ENCODE measurements at regions of chr14 and their contacts with region 1.

Region 1: DNA sequence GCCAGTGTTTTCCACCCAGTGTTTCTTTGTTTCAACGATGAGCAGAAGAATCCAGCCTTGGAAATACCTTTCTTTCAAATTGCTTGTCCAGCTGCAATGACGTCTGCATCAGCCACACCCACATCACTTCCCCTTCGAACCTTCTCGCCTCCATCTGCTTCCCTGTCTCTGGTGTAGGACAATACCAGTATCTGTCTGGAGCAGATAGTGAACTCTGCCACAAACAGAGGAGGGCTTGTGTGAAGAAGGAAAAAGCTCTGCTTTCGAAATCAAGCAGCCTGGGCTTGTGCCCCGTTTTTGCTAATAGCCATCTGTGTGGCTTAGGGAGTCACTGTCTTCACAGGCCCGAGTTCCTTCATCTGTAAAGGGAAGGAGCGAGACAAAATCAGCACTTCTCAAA is 415.4 kb downstream of the ZFP36L1 start:
- DNase-seq: no peak
- ATAC-seq: peak; percentile 28
- H3K4me3 ChIP-seq: no peak overlapping the region
- H3K27ac ChIP-seq: peak overlapping the region; percentile 83
- H3K4me1 ChIP-seq: peaks cover 67% of the 10 kb centered on the region
- H3K27me3 ChIP-seq: no peaks in the 10 kb centered on the region
- CTCF ChIP-seq: no peak
- EP300 ChIP-seq: no peak
- POLR2A ChIP-seq: no peak
- RAD21 ChIP-seq: no peak

Region 2: DNA sequence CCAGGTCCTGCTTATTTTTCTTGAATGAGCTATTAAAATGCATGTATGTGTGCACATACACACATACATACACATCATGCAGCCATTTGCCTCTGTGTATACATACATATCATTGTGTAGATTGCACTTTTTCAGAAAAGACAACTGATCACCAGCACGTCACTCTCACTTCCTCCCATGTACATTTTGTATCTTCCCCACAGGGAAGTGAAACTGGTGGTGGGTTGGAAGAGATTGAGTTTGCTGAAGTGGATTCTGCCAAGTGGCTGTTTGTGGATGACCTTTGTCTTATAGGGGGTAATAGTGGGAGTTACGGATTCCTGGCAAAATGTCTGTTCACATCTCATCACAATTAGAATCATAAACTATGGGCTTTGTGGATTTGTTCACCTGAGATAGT is 109.3 kb before region 1 on chr14:
- CTCF ChIA-PET with region 1: interaction called, 4 read pairs
- POLR2A ChIA-PET with region 1: interaction called, 7 read pairs
- RAD21 ChIA-PET with region 1: interaction called, 13 read pairs
- SMC1A ChIA-PET with region 1: interaction called, 51 read pairs
- in situ Hi-C with region 1: no loop called
- intact Hi-C with region 1: loop called (anchors 1 kb)
- DNase-seq: peak; percentile 93
- ATAC-seq: peak; percentile 84
- H3K4me3 ChIP-seq: no peak overlapping the region
- H3K27ac ChIP-seq: peak overlapping the region; percentile 84
- H3K4me1 ChIP-seq: peaks cover 73% of the 10 kb centered on the region
- H3K27me3 ChIP-seq: no peaks in the 10 kb centered on the region
- CTCF ChIP-seq: no peak
- EP300 ChIP-seq: peak; percentile 93 to 100; a peak in 3 of 4 replicates
- POLR2A ChIP-seq: no peak
- RAD21 ChIP-seq: peak; percentile 22

Region 3: GRCh38 chr14:68307014-68307789 is 70.3 kb before region 1 on chr14:
- CTCF ChIA-PET with region 1: interaction called, 17 read pairs
- POLR2A ChIA-PET with region 1: interaction called, 8 read pairs
- RAD21 ChIA-PET with region 1: interaction called, 40 read pairs
- SMC1A ChIA-PET with region 1: interaction called, 151 read pairs
- in situ Hi-C with region 1: no loop called
- intact Hi-C with region 1: loop called (anchors 2 kb)
- DNase-seq: no peak
- ATAC-seq: no peak
- H3K4me3 ChIP-seq: no peak overlapping the region; the same call in 1 of the 2 replicates
- H3K27ac ChIP-seq: peak overlapping the region; percentile 98
- H3K4me1 ChIP-seq: peaks cover 53% of the 10 kb centered on the region
- H3K27me3 ChIP-seq: no peaks in the 10 kb centered on the region
- CTCF ChIP-seq: no peak
- EP300 ChIP-seq: no peak
- POLR2A ChIP-seq: no peak
- RAD21 ChIP-seq: no peak

Region 4: DNA sequence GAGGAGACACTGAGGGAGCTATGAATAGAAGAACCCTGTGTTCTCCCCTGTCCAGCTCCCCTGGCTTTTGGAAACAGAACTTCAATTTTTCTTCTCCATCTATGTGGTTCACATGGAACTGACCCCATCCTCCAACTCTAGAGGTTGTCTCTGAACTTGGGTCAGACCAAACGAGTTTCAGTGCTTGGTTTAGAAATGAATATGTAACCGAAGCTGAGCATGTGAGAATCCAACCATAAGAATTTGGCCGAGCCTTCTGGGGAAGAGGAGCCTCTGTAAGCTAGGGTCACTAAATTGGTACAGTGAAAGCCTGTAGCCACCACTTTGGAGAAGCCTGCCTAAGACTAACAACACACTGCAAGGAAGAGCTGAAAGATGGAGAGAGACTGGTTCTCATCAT is 49.0 kb before region 1 on chr14:
- CTCF ChIA-PET with region 1: interaction called, 5 read pairs
- POLR2A ChIA-PET with region 1: no interaction called
- RAD21 ChIA-PET with region 1: interaction called, 9 read pairs
- SMC1A ChIA-PET with region 1: interaction called, 151 read pairs
- in situ Hi-C with region 1: no loop called
- intact Hi-C with region 1: no loop called
- DNase-seq: no peak
- ATAC-seq: peak; percentile 85
- H3K4me3 ChIP-seq: no peak overlapping the region
- H3K27ac ChIP-seq: peak overlapping the region; percentile 64
- H3K4me1 ChIP-seq: peaks cover 36% of the 10 kb centered on the region
- H3K27me3 ChIP-seq: no peaks in the 10 kb centered on the region
- CTCF ChIP-seq: no peak
- EP300 ChIP-seq: peak in 1 of 2 experiments; percentile 44; a peak in 1 of 4 replicates
- POLR2A ChIP-seq: no peak
- RAD21 ChIP-seq: peak; percentile 30; the same call in 1 of the 2 replicates

Region 5: GRCh38 chr14:68408680-68409079 is 31.2 kb after region 1 on chr14:
- CTCF ChIA-PET with region 1: interaction called, 15 read pairs
- POLR2A ChIA-PET with region 1: interaction called, 103 read pairs
- RAD21 ChIA-PET with region 1: interaction called, 194 read pairs
- SMC1A ChIA-PET with region 1: interaction called, 181 read pairs
- in situ Hi-C with region 1: no loop called
- intact Hi-C with region 1: no loop called
- DNase-seq: no peak
- ATAC-seq: peak; percentile 42
- H3K4me3 ChIP-seq: no peak overlapping the region
- H3K27ac ChIP-seq: no peak overlapping the region
- H3K4me1 ChIP-seq: peaks cover 39% of the 10 kb centered on the region
- H3K27me3 ChIP-seq: no peaks in the 10 kb centered on the region
- CTCF ChIP-seq: peak; percentile 25 to 54 (median 33); a peak in 5 of 6 replicates
- EP300 ChIP-seq: no peak
- POLR2A ChIP-seq: no peak
- RAD21 ChIP-seq: peak; percentile 67

Region 6: DNA sequence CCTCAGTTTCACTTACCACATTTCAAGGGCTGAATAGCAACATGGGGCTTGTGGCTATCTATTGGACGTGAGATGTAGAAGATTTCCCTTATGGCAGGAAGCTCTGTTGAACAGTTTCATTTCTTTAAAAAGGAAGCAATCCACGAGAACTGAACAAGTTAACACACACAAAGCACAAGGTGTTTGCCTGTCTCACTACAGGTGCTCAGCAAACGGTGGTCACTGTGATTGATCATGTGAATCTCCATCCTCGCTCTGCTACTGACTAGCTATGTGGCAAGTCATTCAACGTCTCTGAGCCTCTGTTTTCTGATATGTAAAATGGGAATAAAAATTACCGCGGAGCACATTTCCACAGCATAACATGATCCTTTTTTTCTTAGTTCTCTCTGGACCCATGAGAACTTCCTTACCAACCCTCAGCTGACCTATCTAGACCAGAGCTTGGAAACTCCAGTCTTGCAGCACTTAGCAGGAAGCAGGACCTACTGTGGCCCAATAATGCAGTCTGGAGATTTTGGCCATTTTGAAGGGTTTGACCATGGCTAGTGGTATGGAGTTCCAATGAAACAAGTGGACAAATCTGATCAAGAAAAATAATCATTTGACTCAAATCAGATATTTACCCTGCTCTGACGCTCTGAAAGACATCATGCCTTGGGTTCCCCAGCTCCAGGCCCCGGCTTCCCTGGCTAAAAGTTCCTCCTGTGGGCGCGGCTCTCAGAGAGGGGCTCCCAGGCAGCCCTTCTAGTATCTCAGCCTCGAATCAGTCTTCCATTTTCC is 136.6 kb after region 1 on chr14:
- CTCF ChIA-PET with region 1: interaction called, 3 read pairs
- POLR2A ChIA-PET with region 1: interaction called, 4 read pairs
- RAD21 ChIA-PET with region 1: interaction called, 3 read pairs
- SMC1A ChIA-PET with region 1: interaction called, 10 read pairs
- in situ Hi-C with region 1: no loop called
- intact Hi-C with region 1: no loop called
- DNase-seq: peak; percentile 92
- ATAC-seq: peak; percentile 92
- H3K4me3 ChIP-seq: no peak overlapping the region; the same call in 1 of the 2 replicates
- H3K27ac ChIP-seq: peak overlapping the region; percentile 85
- H3K4me1 ChIP-seq: peaks cover 24% of the 10 kb centered on the region
- H3K27me3 ChIP-seq: no peaks in the 10 kb centered on the region
- CTCF ChIP-seq: no peak
- EP300 ChIP-seq: 0 out of 4 replicates have a peak, but pooled peaks of 1 of the 2 experiments have one; percentile 46
- POLR2A ChIP-seq: peak; percentile 47; the same call in 1 of the 2 replicates
- RAD21 ChIP-seq: no peak